ENCODE measurements at regions of chr10 and their contacts with region 1.

Region 1: DNA sequence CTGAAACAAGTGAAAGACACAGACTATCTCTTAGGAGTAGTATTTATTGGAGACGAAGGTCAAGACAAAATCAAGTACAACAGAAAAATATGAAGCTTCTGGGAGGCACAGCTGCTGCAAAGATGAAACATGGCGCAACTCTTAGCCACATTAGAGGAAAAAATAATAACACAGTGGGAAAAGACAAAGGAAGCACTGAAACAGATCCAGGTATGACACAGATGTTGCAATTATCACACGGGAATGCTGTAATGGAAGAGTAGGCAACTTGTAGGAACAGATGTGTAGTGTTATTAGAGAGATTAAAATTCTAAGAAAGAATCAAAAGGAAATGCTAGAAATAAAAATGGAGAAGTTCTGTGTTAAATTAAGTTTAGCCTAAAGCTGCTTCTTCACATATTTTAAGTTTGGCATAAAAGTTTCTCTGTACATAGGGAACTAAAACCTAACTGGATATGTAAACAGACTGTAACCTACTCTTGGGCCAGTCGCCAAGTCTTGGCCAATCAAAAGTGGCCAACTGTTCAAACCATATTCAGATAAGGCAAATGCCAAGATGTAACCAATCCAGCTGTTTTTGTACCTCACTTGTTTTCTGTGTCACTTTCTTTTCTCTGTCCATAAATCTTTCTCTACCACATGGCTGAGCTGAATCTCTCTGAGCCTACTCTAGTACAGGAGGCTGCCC is 1132.0 kb upstream of the LRRTM3 start:
- DNase-seq: peak; percentile 46
- H3K4me3 Mint-ChIP-seq: peak overlapping the region; percentile 7
- H3K27ac Mint-ChIP-seq: peak overlapping the region; percentile 77
- H3K4me1 Mint-ChIP-seq: peaks cover 31% of the 10 kb centered on the region
- H3K27me3 Mint-ChIP-seq: no peaks in the 10 kb centered on the region
- CTCF ChIP-seq: no peak

Region 2: GRCh38 chr10:65805993-65806392 is 12.1 kb after region 1 on chr10:
- CTCF ChIA-PET with region 1: no interaction called
- intact Hi-C with region 1: no loop called
- DNase-seq: no peak
- H3K4me3 Mint-ChIP-seq: no peak overlapping the region
- H3K27ac Mint-ChIP-seq: no peak overlapping the region
- H3K4me1 Mint-ChIP-seq: no peaks in the 10 kb centered on the region
- H3K27me3 Mint-ChIP-seq: no peaks in the 10 kb centered on the region
- CTCF ChIP-seq: no peak

Region 3: DNA sequence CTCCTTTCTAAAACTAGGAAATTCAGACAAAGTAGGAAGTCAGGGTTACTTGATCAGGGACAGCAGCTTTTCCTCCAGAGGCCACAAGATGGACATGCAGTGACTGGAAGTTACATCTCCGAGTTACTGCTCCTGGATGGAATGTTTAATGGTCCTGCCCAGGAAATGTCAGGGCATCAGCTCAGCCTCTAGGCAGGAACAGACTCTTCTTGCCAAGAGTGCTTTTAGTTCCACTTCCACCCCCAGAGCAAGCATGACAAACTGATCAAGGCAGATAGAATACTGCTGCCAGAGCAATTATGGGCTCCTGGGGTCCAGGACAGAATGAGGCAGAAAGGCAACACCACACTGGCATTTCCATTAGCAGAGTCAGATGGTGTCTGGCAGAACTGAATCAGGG is 117.6 kb after region 1 on chr10:
- CTCF ChIA-PET with region 1: no interaction called
- intact Hi-C with region 1: loop called (anchors 5 kb)
- DNase-seq: no peak
- H3K4me3 Mint-ChIP-seq: no peak overlapping the region
- H3K27ac Mint-ChIP-seq: no peak overlapping the region
- H3K4me1 Mint-ChIP-seq: peaks cover 23% of the 10 kb centered on the region
- H3K27me3 Mint-ChIP-seq: no peaks in the 10 kb centered on the region
- CTCF ChIP-seq: no peak